Colonic mucosa (tissue), 4 donors: ENCODE measurements at regions of chr3 and their contacts with region 1.

Region 1: DNA sequence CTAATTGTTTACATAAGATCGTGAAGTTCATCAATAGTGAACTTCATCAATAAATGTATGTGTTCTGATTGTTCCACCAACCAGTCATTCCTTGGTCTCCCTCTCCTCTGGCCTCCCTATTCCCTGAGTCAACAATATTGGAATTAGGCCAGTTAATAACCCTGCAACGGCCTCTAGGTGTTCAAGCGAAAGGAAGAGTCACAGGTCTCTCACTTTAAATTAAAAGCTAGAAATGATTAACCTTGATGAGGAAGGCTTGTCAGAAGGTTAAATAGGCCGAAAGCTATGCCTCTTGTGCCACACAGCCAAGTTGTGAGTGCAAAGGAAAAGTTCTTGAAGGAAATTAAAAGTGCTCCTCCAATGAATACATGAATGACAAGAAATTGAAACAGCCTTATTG is 89.4 kb upstream of the ACKR4 start:
- DNase-seq: no peak
- H3K4me3 ChIP-seq: no peak overlapping the region
- H3K27ac ChIP-seq: peak overlapping the region; percentile 37
- H3K4me1 ChIP-seq: peaks cover 9% of the 10 kb centered on the region
- H3K27me3 ChIP-seq: no peaks in the 10 kb centered on the region
- CTCF ChIP-seq: no peak

Region 2: DNA sequence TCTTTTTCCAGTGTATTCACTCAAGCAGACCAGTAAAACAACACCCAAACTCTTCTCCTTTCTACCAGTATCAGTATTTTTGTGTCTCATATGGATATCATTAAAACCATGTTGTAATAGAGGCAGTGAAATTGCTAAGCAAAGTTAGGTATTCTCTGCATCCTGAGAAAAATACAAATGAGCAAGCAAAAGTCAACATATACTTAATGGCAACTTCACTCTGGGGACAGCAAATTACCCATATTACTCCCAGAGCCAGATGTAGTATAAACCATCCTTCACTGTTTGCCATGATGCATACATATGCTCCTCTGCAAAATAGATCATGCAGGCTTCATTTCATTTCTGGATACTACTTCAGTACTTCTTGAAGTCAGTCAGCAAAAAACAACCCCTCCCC is 174.5 kb after region 1 on chr3:
- intact Hi-C with region 1: loop called (anchors 10 kb)
- DNase-seq: no peak
- H3K4me3 ChIP-seq: no peak overlapping the region
- H3K27ac ChIP-seq: no peak overlapping the region
- H3K4me1 ChIP-seq: no peaks in the 10 kb centered on the region
- H3K27me3 ChIP-seq: no peaks in the 10 kb centered on the region
- CTCF ChIP-seq: no peak